ENCODE measurements at regions of chr12 and their contacts with region 1.

Region 1: DNA sequence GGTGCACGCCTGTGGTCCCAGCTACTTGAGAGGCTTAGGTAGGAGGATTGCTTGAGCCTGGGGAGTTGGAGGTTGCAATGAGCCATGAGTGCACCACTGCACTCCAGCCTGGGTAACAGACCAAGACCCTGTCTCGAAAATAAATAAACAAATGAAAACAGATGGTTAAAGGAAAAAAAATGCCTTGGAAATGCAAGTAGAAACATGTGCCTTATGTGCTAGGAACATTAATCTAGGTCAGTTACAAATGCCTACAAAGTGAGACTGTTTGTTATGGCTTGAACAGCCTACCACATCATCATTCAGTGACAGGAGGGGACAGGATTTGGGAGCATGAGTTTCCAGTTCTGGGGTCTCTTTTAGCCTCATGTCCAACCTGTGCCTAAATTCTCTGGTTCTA is 52.4 kb upstream of the BCAT1 start:
- DNase-seq: no peak
- ATAC-seq: no peak
- H3K4me3 ChIP-seq: no peak overlapping the region
- H3K27ac ChIP-seq: no peak overlapping the region
- H3K4me1 ChIP-seq: no peaks in the 10 kb centered on the region
- H3K27me3 ChIP-seq: no peaks in the 10 kb centered on the region
- CTCF ChIP-seq: no peak

Region 2: GRCh38 chr12:24872211-24872610 is 129.1 kb before region 1 on chr12:
- intact Hi-C with region 1: no loop called
- DNase-seq: no peak
- ATAC-seq: no peak
- H3K4me3 ChIP-seq: no peak overlapping the region
- H3K27ac ChIP-seq: no peak overlapping the region
- H3K4me1 ChIP-seq: no peaks in the 10 kb centered on the region
- H3K27me3 ChIP-seq: no peaks in the 10 kb centered on the region
- CTCF ChIP-seq: no peak

Region 3: DNA sequence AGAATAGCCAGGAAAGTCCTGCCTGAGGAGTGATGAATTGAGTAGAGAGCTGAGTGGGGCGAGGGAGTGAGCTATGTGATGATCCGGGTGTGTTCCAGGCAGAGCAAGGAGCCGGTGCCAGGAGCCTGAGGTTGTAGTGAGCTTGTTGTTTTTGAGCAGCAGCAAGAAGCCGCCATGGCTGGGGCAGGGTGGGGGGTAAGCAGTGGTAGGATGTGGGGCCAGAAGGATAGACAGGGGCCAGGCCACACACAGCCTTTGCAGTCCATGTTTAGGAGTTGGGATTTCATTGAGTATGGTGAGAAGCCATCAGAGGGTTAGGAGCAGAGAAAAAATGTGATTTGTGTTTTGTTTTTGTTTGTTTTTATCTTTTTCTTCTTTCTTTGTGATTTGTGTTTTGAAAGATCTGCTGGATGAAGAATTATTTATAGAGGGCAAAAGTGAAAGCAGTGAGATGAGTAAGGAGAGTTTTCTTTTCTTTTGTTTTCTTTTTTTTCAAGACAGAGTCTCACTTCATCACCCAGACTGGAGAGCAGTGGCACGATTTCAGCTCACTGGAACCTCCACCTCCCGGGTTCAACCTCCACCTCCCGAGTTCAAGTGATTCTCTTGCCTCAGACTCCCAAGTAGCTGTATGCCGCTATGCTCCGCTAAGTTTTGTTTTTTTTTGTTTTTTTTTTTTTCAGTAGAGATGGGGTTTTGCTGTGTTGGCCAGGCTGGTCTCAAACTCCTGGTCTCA is 39.9 kb after region 1 on chr12:
- intact Hi-C with region 1: loop called in 1 of 3 experiments (anchors 2 kb)
- DNase-seq: no peak
- ATAC-seq: no peak
- H3K4me3 ChIP-seq: no peak overlapping the region
- H3K27ac ChIP-seq: no peak overlapping the region
- H3K4me1 ChIP-seq: no peaks in the 10 kb centered on the region
- H3K27me3 ChIP-seq: no peaks in the 10 kb centered on the region
- CTCF ChIP-seq: no peak

Region 4: GRCh38 chr12:26126340-26127284 is 1125.3 kb after region 1 on chr12:
- intact Hi-C with region 1: no loop called
- DNase-seq: peak; percentile 84 to 93 (median 88)
- ATAC-seq: peak; percentile 67 to 76 (median 70)
- H3K4me3 ChIP-seq: peak overlapping the region; percentile 22 to 71 (median 55)
- H3K27ac ChIP-seq: peak overlapping the region; percentile 91 to 99 (median 94)
- H3K4me1 ChIP-seq: peaks cover 0 to 12% (median 6%) of the 10 kb centered on the region in 3 donors
- H3K27me3 ChIP-seq: no peaks in the 10 kb centered on the region
- CTCF ChIP-seq: no peak